WTC11 (cell line): ENCODE measurements at regions of chr1 and their contacts with region 1.

Region 1: GRCh38 chr1:200669314-200670241 is at the start of gene DDX59:
- DNase-seq: peak; percentile 96
- ATAC-seq: peak; percentile 88
- H3K4me3 Mint-ChIP-seq: peak within 1 kb of the TSS; percentile 80
- H3K27ac Mint-ChIP-seq: peak within 1 kb of the TSS; percentile 70
- H3K4me1 Mint-ChIP-seq: peaks cover 36% of the 10 kb centered on the region
- H3K27me3 Mint-ChIP-seq: no peaks in the 10 kb centered on the region
- CTCF ChIP-seq: no peak
- total RNA-seq, gene DDX59: 15.5 to 19.4 TPM (median 17.0 TPM) in 3 replicates

Region 2: DNA sequence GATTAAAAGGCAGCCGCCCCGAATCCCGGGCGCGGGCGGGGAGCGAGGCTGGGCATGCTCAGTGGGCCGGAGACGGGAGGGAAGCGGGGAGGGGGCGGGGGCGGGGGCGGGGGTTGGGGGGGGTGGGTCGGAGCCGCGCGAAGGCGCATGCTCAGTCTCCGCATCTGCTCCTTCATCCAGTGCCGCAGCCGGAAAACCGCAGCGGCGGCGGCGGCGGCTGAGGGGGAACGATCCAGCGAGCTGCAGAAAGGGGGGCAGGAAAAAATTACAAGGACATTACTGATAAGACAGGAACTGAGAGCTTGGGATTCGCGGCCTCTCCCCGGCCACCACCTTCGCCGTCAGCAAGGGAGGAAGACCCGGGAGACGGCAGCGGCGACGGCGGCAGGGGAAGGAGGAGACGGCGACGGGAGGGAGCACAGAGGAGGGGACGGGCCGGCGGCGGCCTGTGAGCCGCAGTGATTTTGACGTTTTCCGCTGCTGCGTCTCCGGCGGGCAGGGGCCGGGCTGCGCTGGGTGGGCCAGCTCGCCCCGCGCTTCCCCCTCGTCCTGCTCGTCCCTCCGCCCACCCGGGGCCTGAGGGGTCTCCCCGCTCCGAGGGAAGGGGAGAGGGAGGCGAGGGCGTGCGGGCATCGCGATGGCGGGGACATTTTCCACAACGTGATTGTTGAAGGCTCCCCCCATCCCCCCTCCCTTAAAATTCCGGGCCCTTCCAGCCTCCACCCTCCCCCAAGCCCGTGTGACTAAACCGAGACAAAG is 69.3 kb after region 1 on chr1 and contains the start of gene CAMSAP2:
- CTCF ChIA-PET with region 1: interaction called, 4 read pairs
- POLR2A ChIA-PET with region 1: interaction called, 17 read pairs
- DNase-seq: peak; percentile 80
- ATAC-seq: peak; percentile 77
- H3K4me3 Mint-ChIP-seq: peak within 1 kb of the TSS; percentile 99
- H3K27ac Mint-ChIP-seq: peak within 1 kb of the TSS; percentile 100
- H3K4me1 Mint-ChIP-seq: peaks cover 29% of the 10 kb centered on the region
- H3K27me3 Mint-ChIP-seq: peaks cover 4% of the 10 kb centered on the region
- CTCF ChIP-seq: no peak
- total RNA-seq, gene CAMSAP2: 18.1 to 20.7 TPM (median 19.0 TPM) in 3 replicates

Region 3: DNA sequence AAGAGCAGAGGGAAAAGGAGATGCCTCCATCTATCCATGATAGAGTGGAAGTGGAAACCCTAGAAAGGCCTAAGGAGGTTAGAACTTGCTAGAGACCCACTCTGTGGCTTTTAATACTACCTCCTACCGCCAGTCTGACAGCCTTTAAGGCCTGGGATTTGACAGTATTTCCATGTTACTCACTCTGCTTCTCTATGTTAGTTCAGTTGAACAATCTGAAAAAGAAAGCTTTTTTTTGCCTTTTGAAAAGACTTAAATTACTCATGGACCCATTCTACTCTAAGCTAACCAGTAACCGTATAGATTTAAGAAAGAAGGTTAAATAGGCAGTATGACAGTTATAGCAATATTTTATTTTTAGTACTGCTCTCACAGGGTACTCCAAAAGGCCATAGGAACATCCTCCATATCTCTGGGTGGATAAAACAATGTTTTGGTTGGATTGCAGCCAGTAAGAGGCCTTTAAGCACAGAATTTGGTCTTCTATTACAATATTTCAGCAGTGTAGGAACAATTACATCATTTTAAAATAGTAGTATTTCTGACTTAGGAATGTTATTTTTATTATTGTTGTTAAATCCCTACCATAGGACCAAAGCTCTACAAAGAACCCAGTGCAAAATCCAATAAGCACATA is 187.3 kb after region 1 on chr1:
- CTCF ChIA-PET with region 1: no interaction called
- POLR2A ChIA-PET with region 1: no interaction called
- DNase-seq: no peak
- ATAC-seq: no peak
- H3K4me3 Mint-ChIP-seq: no peak overlapping the region
- H3K27ac Mint-ChIP-seq: no peak overlapping the region
- H3K4me1 Mint-ChIP-seq: no peaks in the 10 kb centered on the region
- H3K27me3 Mint-ChIP-seq: no peaks in the 10 kb centered on the region
- CTCF ChIP-seq: no peak

Region 4: DNA sequence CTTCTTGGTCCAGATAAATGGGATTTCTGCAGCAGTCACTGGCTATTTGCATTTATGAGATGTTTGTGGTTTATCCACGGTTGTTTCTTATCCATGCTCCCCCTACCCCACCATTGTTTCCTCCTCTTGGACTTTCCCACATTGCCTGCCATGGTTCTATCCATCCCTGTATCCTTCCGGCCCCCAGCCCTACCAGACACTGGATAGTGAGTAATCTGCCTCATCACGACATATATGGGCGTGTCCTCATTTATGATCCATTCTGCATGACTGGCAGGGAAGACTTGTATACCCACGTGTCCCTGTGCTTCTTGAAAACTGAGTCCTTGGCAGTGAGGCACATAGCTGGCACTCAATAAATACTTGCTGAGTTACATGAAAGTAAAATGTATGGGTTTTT is 402.6 kb after region 1 on chr1:
- CTCF ChIA-PET with region 1: no interaction called
- POLR2A ChIA-PET with region 1: no interaction called
- DNase-seq: no peak
- ATAC-seq: no peak
- H3K4me3 Mint-ChIP-seq: no peak overlapping the region
- H3K27ac Mint-ChIP-seq: no peak overlapping the region
- H3K4me1 Mint-ChIP-seq: peaks cover 10% of the 10 kb centered on the region
- H3K27me3 Mint-ChIP-seq: no peaks in the 10 kb centered on the region
- CTCF ChIP-seq: no peak